Prostate gland (tissue), 2 donors: ENCODE measurements at regions of chr3 and their contacts with region 1.

Region 1: GRCh38 chr3:181176601-181177000 is 187.1 kb upstream of the DNAJC19 start:
- DNase-seq: peak; percentile 22
- H3K4me3 ChIP-seq: no peak overlapping the region
- H3K27ac ChIP-seq: no peak overlapping the region
- H3K4me1 ChIP-seq: no peaks in the 10 kb centered on the region
- H3K27me3 ChIP-seq: no peaks in the 10 kb centered on the region
- CTCF ChIP-seq: peak; percentile 14 to 60 (median 34)
- POLR2A ChIP-seq: no peak

Region 2: DNA sequence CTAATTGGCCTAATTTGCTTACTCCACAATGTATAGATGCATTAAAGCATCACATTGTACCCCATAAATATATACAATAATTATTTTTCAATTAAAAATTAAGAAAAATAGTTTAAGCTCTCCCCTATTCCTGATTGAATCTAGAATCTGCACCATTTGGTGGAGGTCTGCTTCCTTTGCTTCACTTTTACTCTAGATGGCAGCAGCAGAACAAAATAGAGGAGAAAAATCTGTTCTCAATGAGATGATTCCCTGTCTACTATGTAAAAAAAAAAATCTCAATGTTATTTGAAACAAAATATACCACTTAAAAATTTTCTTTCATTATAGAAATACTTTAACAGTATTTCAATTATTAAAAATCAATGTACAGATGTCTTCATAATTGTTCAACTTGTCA is 373.8 kb before region 1 on chr3:
- intact Hi-C with region 1: loop called (anchors 10 kb)
- DNase-seq: no peak
- H3K4me3 ChIP-seq: no peak overlapping the region
- H3K27ac ChIP-seq: no peak overlapping the region
- H3K4me1 ChIP-seq: no peaks in the 10 kb centered on the region
- H3K27me3 ChIP-seq: no peaks in the 10 kb centered on the region
- CTCF ChIP-seq: peak in 3 of 4 experiments; percentile 22 to 37 (median 29)
- POLR2A ChIP-seq: no peak

Region 3: GRCh38 chr3:181212271-181212670 is 35.7 kb after region 1 on chr3:
- intact Hi-C with region 1: no loop called
- DNase-seq: no peak
- H3K4me3 ChIP-seq: no peak overlapping the region
- H3K27ac ChIP-seq: no peak overlapping the region
- H3K4me1 ChIP-seq: no peaks in the 10 kb centered on the region
- H3K27me3 ChIP-seq: no peaks in the 10 kb centered on the region
- CTCF ChIP-seq: no peak
- POLR2A ChIP-seq: no peak